ENCODE measurements at regions of chr1 and their contacts with region 1.

Region 1: GRCh38 chr1:221478050-221478949 is 263.6 kb downstream of the DUSP10 start:
- DNase-seq: peak; percentile 63
- H3K4me3 ChIP-seq: no peak overlapping the region
- CTCF ChIP-seq: peak; percentile 96

Region 2: GRCh38 chr1:221256773-221257477 is 221.4 kb before region 1 on chr1:
- CTCF ChIA-PET with region 1: no interaction called
- POLR2A ChIA-PET with region 1: no interaction called
- DNase-seq: no peak
- H3K4me3 ChIP-seq: no peak overlapping the region
- CTCF ChIP-seq: no peak

Region 3: DNA sequence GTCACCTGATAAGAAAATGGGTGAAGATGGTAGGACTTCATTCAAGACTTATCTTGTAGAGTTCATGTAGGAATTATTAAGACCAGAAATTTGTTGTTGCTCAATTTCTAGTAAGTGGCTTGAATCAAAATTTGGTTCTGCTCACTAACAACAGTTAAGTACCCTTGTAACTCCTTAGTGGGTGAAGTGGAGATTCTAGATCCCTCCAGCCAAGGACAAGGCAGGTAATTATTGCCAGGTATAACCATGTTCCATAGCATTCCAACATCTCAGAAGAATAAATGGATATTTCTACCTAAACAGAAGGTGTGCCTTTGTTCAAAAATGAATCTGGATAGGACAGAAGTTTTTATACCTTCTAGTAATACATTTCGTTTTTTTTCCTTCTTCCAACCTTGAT is 18.7 kb before region 1 on chr1:
- CTCF ChIA-PET with region 1: interaction called, 11 read pairs
- POLR2A ChIA-PET with region 1: interaction called, 3 read pairs
- DNase-seq: no peak
- H3K4me3 ChIP-seq: no peak overlapping the region
- CTCF ChIP-seq: no peak

Region 4: GRCh38 chr1:221667504-221667903 is 189.2 kb after region 1 on chr1:
- CTCF ChIA-PET with region 1: no interaction called
- POLR2A ChIA-PET with region 1: no interaction called
- DNase-seq: peak; percentile 46
- H3K4me3 ChIP-seq: no peak overlapping the region
- CTCF ChIP-seq: no peak

Measured in AG04449 (cell line).